Right ventricle myocardium superior (tissue), 1 donor: ENCODE measurements at regions of chr4 and their contacts with region 1.

Region 1: GRCh38 chr4:102500696-102501446 is at the start of gene NFKB1:
- DNase-seq: peak; percentile 84
- ATAC-seq: peak; percentile 64
- total RNA-seq, gene NFKB1: 18.9 TPM

Region 2: GRCh38 chr4:102247041-102247440 is 253.8 kb before region 1 on chr4:
- intact Hi-C with region 1: no loop called
- DNase-seq: no peak
- ATAC-seq: no peak

Region 3: GRCh38 chr4:102554482-102554881 is 53.6 kb after region 1 on chr4:
- intact Hi-C with region 1: loop called (anchors 10 kb)
- DNase-seq: peak; percentile 71
- ATAC-seq: peak; percentile 90